ENCODE measurements at regions of chr3 and their contacts with region 1.

Region 1: GRCh38 chr3:157081681-157082210 is 78.2 kb downstream of the CCNL1 start:
- DNase-seq: peak; percentile 98
- ATAC-seq: peak; percentile 94
- H3K4me3 ChIP-seq: peak overlapping the region; percentile 38; the same call in 1 of the 2 replicates
- H3K27ac ChIP-seq: peak overlapping the region; percentile 97
- H3K4me1 ChIP-seq: peaks cover 36% of the 10 kb centered on the region
- H3K27me3 ChIP-seq: no peaks in the 10 kb centered on the region
- CTCF ChIP-seq: peak; percentile 99

Region 2: DNA sequence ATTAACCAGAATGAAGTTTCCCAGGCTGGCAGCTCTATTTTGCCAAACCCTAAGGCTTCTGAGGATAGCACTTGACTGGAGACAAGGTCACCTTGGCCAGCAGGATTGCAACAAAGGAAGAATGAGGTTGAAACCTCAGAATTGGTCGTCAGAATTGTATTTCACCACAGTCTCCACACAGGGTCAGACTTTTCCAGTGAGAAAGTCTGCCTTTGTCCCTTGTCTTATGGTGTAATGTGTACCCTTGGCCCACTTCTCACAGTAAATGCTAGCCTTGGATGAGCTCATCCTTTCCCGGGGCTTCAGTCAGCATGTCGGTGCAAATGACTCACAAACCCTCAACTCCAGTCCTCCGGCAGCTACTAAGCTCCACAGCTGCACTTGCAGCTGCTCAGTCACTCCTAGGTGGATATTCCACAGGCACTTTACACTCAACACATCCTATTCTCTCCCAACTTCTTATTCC is 546.6 kb before region 1 on chr3:
- CTCF ChIA-PET with region 1: interaction called, 7 read pairs
- POLR2A ChIA-PET with region 1: interaction called, 4 read pairs
- intact Hi-C with region 1: loop called (anchors 2 kb)
- DNase-seq: peak; percentile 97
- ATAC-seq: peak; percentile 95
- H3K4me3 ChIP-seq: no peak overlapping the region
- H3K27ac ChIP-seq: peak overlapping the region; percentile 79
- H3K4me1 ChIP-seq: peaks cover 28% of the 10 kb centered on the region
- H3K27me3 ChIP-seq: no peaks in the 10 kb centered on the region
- CTCF ChIP-seq: peak; percentile 71

Region 3: DNA sequence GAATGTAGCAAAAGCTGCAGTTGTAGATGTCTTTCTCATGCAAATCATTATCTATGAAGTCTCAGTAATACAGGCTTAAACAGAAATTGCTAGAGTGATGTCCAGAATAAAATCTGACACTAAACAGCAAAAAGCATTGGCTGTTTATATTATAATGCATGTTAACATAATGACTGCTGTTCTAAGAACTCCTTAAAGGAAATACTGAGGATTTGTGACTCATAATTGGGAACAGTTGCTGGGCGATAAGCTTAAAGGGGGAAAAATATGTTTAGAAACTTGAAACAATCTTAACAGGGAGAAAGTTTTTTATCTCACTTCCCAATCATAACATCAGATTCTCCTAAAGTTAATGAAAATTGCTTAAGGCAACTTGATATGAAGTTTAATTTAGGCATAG is 389.8 kb before region 1 on chr3:
- CTCF ChIA-PET with region 1: interaction called, 3 read pairs
- POLR2A ChIA-PET with region 1: no interaction called
- intact Hi-C with region 1: loop called (anchors 1 kb)
- DNase-seq: peak; percentile 67
- ATAC-seq: peak; percentile 40
- H3K4me3 ChIP-seq: peak overlapping the region; percentile 1; the same call in 1 of the 2 replicates
- H3K27ac ChIP-seq: peak overlapping the region; percentile 61
- H3K4me1 ChIP-seq: peaks cover 61% of the 10 kb centered on the region
- H3K27me3 ChIP-seq: no peaks in the 10 kb centered on the region
- CTCF ChIP-seq: no peak

Region 4: GRCh38 chr3:156865732-156866131 is 216.0 kb before region 1 on chr3:
- CTCF ChIA-PET with region 1: no interaction called
- POLR2A ChIA-PET with region 1: interaction called, 4 read pairs
- intact Hi-C with region 1: loop called (anchors 1 kb)
- DNase-seq: peak; percentile 32
- ATAC-seq: peak; percentile 25
- H3K4me3 ChIP-seq: no peak overlapping the region
- H3K27ac ChIP-seq: peak overlapping the region; percentile 29
- H3K4me1 ChIP-seq: peaks cover 38% of the 10 kb centered on the region
- H3K27me3 ChIP-seq: no peaks in the 10 kb centered on the region
- CTCF ChIP-seq: 0 out of 2 replicates have a peak, but pooled peaks have one; percentile 12

Region 5: DNA sequence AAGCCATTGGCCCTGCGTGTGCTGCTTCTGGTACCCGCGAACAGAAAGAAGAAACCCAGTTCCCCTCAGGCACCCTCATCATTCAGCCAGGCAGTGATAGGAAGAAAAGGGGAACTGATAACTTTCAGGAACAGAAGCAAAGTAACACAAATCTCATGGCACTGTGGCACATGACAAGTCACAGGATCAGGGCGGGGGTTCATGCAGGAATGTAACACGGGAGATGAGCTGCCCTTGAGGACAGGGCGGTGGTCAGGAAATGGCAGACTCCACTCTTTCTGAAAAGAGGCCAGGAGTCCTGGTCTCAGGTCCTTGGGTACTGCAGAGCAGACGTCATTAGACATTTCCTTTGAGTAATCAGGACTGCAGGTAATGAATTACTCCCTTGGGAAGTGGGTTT is 17.3 kb before region 1 on chr3:
- CTCF ChIA-PET with region 1: interaction called, 15 read pairs
- POLR2A ChIA-PET with region 1: no interaction called
- intact Hi-C with region 1: no loop called
- DNase-seq: no peak
- ATAC-seq: no peak
- H3K4me3 ChIP-seq: no peak overlapping the region
- H3K27ac ChIP-seq: no peak overlapping the region
- H3K4me1 ChIP-seq: peaks cover 11% of the 10 kb centered on the region
- H3K27me3 ChIP-seq: no peaks in the 10 kb centered on the region
- CTCF ChIP-seq: no peak